ENCODE measurements at regions of chr2 and their contacts with region 1.

Region 1: DNA sequence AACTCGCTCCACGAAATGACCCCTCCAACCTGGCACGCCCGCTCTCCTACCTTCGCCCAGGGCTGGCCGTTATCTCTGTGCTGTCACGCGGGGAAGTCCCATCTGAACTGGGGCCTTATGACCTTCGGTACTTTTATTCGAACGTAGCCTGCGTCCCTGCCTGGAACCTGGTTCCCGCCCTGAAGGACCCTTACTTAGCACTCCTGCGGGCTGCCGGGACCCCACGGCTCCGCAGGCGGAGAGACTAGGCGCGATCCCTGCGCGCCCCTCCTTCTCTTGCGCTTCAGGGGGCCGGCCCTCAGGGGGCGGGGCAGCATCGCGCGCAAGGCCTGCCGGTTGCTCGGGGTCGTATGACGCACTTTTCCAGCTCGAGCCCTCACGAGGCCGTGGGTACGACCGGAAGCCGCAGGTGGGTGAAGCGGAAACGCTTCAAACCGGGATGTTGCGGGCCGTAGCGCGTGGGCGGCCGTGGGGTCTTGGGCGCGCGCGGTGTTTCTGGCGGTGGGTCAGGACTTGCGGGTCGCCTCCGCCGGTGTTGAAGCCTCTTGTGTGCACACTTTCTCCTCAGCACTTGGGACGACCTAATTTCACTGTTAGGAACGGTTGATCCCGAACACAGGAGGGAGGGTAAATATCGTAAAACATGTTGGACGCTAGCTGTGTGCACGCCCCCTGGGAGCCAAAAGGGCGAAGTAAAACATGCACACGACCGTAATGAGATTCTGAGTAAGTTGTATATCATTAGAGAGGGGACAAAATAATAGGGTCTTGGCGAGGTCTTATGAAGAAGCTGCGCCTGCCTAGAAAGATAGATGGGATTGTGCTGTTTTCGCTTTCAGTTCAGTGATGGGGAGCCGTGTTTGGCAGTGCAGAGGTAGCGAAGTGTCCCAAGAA is at the starts of genes LIPT1 and TSGA10:
- DNase-seq: peak; percentile 74 to 95
- H3K4me3 ChIP-seq: peak within 1 kb of the TSS; percentile 72 to 73
- H3K27ac ChIP-seq: peak within 1 kb of the TSS; percentile 83 to 84
- H3K4me1 ChIP-seq: peaks cover 0 to 13% of the 10 kb centered on the region in 2 donors
- H3K27me3 ChIP-seq: no peaks in the 10 kb centered on the region
- CTCF ChIP-seq: peak in 1 of 3 experiments; percentile 10
- total RNA-seq, gene LIPT1: not detected
- total RNA-seq, gene TSGA10: not detected

Region 2: GRCh38 chr2:97663965-97664635 is 1490.8 kb before region 1 on chr2 and contains the start of gene ACTR1B:
- intact Hi-C with region 1: loop called (anchors 10 kb)
- DNase-seq: peak; percentile 93 to 99
- H3K4me3 ChIP-seq: peak within 1 kb of the TSS; percentile 78 to 96
- H3K27ac ChIP-seq: peak within 1 kb of the TSS; percentile 94 to 95
- H3K4me1 ChIP-seq: peaks cover 13 to 24% of the 10 kb centered on the region in 2 donors
- H3K27me3 ChIP-seq: no peaks in the 10 kb centered on the region
- CTCF ChIP-seq: peak; percentile 57 to 68 (median 61)
- total RNA-seq, gene ACTR1B: 125 TPM

Region 3: GRCh38 chr2:98608116-98608999 is 546.5 kb before region 1 on chr2 and contains the starts of genes COA5 and UNC50:
- intact Hi-C with region 1: loop called (anchors 10 kb)
- DNase-seq: peak; percentile 58 to 93
- H3K4me3 ChIP-seq: peak within 1 kb of the TSS; percentile 77 to 98
- H3K27ac ChIP-seq: peak within 1 kb of the TSS; percentile 96
- H3K4me1 ChIP-seq: peaks cover 25 to 34% of the 10 kb centered on the region in 2 donors
- H3K27me3 ChIP-seq: no peaks in the 10 kb centered on the region
- CTCF ChIP-seq: peak in 1 of 3 experiments; percentile 10
- total RNA-seq, gene COA5: 86.3 TPM
- total RNA-seq, gene UNC50: 34.4 TPM

Region 4: DNA sequence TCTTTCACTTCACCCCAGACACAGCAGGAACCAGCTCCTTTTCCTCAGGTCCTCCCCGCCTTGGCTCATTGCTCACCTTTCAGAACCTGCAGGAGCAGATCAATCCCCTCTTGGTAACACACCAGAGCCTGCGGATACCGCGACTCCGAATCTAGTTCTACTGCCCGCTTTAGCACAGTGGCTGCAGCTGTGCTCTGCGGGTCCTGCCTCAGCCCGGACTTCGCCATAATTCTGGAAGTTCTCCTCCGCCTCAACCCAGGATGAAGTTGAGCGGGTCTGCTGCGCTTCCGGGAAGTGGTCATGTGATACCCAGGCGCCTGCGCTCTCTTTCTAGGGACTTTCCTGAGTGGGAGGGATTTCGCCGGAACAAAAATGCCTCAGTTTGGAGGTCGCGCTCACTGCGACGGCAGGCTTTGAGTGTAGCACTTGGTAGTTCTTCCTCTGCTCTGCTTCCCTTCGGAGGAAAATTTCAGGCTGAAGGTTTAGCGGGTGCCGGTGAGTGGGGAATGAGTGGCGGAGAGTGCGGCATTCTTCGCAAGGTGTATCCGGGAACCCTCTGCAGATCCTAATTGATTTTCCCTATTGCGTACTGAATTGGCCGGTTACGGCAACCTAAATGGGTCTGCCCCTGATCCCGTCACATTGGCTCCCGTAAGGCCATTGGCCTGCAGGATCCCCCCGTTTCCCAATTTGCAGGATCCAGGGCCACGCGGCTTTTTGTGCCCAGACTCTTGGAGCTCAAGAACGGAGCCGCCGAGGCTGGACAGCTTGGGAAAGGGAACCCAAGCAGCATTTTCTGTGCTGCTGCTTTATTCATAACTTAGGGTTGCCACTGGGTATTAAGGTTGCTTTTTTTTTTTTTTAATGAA is 26.1 kb after region 1 on chr2 and contains the starts of genes MITD1 and MRPL30:
- intact Hi-C with region 1: loop called (anchors 2 kb)
- DNase-seq: peak; percentile 72 to 95
- H3K4me3 ChIP-seq: peak within 1 kb of the TSS; percentile 65 to 89
- H3K27ac ChIP-seq: peak within 1 kb of the TSS; percentile 66 to 70
- H3K4me1 ChIP-seq: peaks cover 0 to 20% of the 10 kb centered on the region in 2 donors
- H3K27me3 ChIP-seq: no peaks in the 10 kb centered on the region
- CTCF ChIP-seq: no peak
- total RNA-seq, gene MITD1: 13.3 TPM
- total RNA-seq, gene MRPL30: 32.6 TPM

Region 5: DNA sequence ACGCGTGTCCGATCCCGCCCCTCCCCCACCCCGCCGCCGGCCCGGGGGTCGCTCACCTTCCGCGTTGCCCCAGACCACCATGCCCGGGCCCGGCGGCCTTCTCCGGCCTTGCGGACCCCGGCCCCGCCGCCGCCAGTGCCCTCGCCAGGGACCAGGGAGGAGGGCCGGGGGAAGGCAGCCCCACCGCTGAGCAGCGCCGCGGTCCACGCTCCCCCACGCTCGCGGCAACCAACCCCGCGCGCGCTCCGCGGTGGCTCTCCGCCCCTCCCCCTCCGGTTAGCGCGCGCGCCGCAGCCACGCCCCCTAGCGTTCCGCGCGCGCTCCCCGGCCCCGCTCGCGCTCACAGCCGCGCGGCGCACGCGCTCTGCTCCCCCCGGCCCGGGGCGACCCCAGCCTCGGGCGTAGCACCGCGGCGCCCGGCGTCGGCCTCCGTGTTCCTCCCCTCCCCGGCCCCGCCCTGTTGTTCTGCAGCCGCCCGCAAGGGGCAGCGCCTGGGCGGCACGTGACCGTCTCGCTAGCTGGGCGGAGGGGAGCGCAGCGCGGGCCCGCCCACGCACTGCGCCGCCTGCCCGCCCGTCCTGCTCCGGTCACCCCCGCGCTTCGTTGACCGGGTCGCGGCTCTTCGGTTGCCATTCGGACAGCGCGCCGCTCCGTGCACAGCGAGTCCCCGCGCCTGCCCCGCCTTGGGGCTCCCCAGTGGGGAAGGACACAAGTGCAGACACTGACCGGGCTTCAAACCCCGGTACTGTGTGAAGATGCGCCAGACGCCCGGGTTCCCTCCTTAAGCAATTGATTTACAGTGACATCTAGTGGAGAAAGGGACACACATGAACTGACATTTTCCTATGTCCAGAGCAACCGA is 335.1 kb after region 1 on chr2 and contains the start of gene REV1:
- intact Hi-C with region 1: loop called (anchors 5 kb)
- DNase-seq: peak; percentile 70 to 95
- H3K4me3 ChIP-seq: peak within 1 kb of the TSS; percentile 99 to 100
- H3K27ac ChIP-seq: peak within 1 kb of the TSS; percentile 89 to 99
- H3K4me1 ChIP-seq: peaks cover 0 to 14% of the 10 kb centered on the region in 2 donors
- H3K27me3 ChIP-seq: no peaks in the 10 kb centered on the region
- CTCF ChIP-seq: peak; percentile 74 to 91 (median 80)
- total RNA-seq, gene REV1: 26.8 TPM

Measured in ascending aorta (tissue), 2 donors.